Right lobe of liver (tissue), 6 donors: ENCODE measurements at regions of chr2 and their contacts with region 1.

Region 1: GRCh38 chr2:191811807-191812602 is 34.9 kb downstream of the CAVIN2 start:
- DNase-seq: peak in 2 of 3 donors; percentile 36 to 58
- ATAC-seq: peak; percentile 93 to 98 (median 94)
- H3K4me3 ChIP-seq: no peak overlapping the region
- H3K27ac ChIP-seq: no peak overlapping the region
- H3K4me1 ChIP-seq: no peaks in the 10 kb centered on the region
- H3K27me3 ChIP-seq: no peaks in the 10 kb centered on the region
- CTCF ChIP-seq: peak; percentile 80 to 84 (median 82)
- POLR2A ChIP-seq: no peak

Region 2: GRCh38 chr2:192162392-192163042 is 350.5 kb after region 1 on chr2:
- intact Hi-C with region 1: loop called (anchors 5 kb)
- DNase-seq: peak in 2 of 3 donors; percentile 28 to 68
- ATAC-seq: peak; percentile 93 to 99 (median 96)
- H3K4me3 ChIP-seq: no peak overlapping the region
- H3K27ac ChIP-seq: no peak overlapping the region
- H3K4me1 ChIP-seq: no peaks in the 10 kb centered on the region
- H3K27me3 ChIP-seq: no peaks in the 10 kb centered on the region
- CTCF ChIP-seq: peak; percentile 91 to 97 (median 94)
- POLR2A ChIP-seq: no peak